ENCODE measurements at regions of chr13 and their contacts with region 1.

Region 1: DNA sequence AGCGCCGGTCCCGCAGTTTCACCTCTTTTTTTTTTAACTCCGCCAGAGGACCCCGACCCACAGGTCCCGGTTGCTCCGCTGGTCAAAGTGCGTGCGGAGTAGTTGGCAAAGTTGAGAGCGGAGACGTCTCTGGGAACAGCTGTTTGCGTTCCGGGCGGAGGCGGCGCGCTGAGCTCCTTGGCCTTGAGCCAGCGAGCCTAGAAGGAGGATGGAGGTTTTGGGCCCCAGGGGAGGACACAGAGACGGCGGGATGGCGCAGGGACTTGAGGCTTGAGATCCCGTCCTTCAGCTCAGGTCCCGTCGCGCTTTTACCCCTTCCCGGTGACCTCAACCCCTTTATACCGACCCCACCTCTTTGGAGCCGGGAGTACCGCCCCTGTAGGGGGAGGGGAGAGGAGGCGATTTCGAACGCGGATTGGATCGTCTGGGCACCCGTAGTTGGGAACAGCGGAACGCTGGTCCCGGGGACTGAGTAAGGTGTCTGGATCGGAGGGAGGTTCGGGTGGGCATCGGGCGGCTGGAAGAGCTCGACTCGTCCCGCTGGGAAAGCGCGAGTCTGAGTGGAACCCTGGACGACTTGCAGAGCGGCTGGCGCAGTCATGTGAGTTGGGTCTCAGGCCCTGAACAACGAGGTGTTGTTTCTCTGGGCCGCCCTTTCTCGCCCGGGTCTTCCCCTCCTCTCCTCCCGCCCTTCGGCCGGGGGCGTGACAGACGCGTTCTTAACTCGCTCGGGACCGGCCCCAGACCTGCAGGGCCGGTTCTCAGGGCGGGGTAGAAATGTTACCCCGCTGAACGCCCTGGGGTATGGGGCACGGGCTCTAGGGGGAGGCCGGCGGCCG is at the start of gene WBP4:
- DNase-seq: peak; percentile 91
- ATAC-seq: peak; percentile 75
- H3K4me3 Mint-ChIP-seq: peak within 1 kb of the TSS; percentile 100
- H3K27ac Mint-ChIP-seq: peak within 1 kb of the TSS; percentile 100
- H3K4me1 Mint-ChIP-seq: peaks cover 39% of the 10 kb centered on the region
- H3K27me3 Mint-ChIP-seq: peaks cover 2% of the 10 kb centered on the region
- CTCF ChIP-seq: no peak
- total RNA-seq, gene WBP4: 8.6 and 9.0 TPM in 2 replicates

Region 2: DNA sequence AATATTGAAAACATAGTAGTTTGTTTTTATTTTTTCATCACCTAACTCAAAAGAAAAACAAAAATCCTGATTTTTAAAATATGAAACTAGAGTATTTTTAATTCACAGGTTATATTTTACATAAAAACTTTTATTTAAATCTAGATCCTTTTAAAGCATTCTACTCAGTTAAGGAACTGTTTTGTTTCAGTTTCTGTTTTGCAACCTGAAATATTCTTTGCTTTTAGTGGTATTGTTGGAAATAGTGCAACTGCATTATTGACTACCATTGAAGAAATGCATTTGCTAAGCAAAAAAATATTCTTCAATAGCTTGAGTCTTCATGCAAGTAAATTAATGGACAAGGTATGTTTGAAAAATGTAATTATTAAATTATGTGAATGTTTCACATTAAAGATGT is 1362.0 kb before region 1 on chr13:
- CTCF ChIA-PET with region 1: no interaction called
- POLR2A ChIA-PET with region 1: no interaction called
- intact Hi-C with region 1: no loop called
- DNase-seq: no peak
- ATAC-seq: no peak
- H3K4me3 Mint-ChIP-seq: no peak overlapping the region
- H3K27ac Mint-ChIP-seq: no peak overlapping the region
- H3K4me1 Mint-ChIP-seq: peaks cover 1% of the 10 kb centered on the region
- H3K27me3 Mint-ChIP-seq: no peaks in the 10 kb centered on the region
- CTCF ChIP-seq: no peak

Region 3: GRCh38 chr13:40789275-40790133 is 271.8 kb before region 1 on chr13 and contains the start of gene SLC25A15:
- CTCF ChIA-PET with region 1: no interaction called
- POLR2A ChIA-PET with region 1: interaction called, 4 read pairs
- intact Hi-C with region 1: loop called (anchors 1 kb)
- DNase-seq: peak; percentile 82
- ATAC-seq: peak; percentile 95
- H3K4me3 Mint-ChIP-seq: peak within 1 kb of the TSS; percentile 83
- H3K27ac Mint-ChIP-seq: peak within 1 kb of the TSS; percentile 53
- H3K4me1 Mint-ChIP-seq: peaks cover 9% of the 10 kb centered on the region
- H3K27me3 Mint-ChIP-seq: no peaks in the 10 kb centered on the region
- CTCF ChIP-seq: no peak
- total RNA-seq, gene SLC25A15: 4.6 and 4.9 TPM in 2 replicates

Region 4: GRCh38 chr13:40982772-40983171 is 78.5 kb before region 1 on chr13:
- CTCF ChIA-PET with region 1: interaction called, 3 read pairs
- POLR2A ChIA-PET with region 1: interaction called, 9 read pairs
- intact Hi-C with region 1: loop called (anchors 1 kb)
- DNase-seq: no peak
- ATAC-seq: peak; percentile 64
- H3K4me3 Mint-ChIP-seq: peak overlapping the region; percentile 87
- H3K27ac Mint-ChIP-seq: peak overlapping the region; percentile 86
- H3K4me1 Mint-ChIP-seq: peaks cover 80% of the 10 kb centered on the region
- H3K27me3 Mint-ChIP-seq: no peaks in the 10 kb centered on the region
- CTCF ChIP-seq: no peak

Region 5: GRCh38 chr13:41132512-41133152 is 71.3 kb after region 1 on chr13 and contains the start of gene KBTBD6:
- CTCF ChIA-PET with region 1: no interaction called
- POLR2A ChIA-PET with region 1: interaction called, 4 read pairs
- intact Hi-C with region 1: loop called (anchors 1 kb)
- DNase-seq: peak; percentile 83
- ATAC-seq: peak; percentile 97
- H3K4me3 Mint-ChIP-seq: peak within 1 kb of the TSS; percentile 98
- H3K27ac Mint-ChIP-seq: peak within 1 kb of the TSS; percentile 91
- H3K4me1 Mint-ChIP-seq: peaks cover 47% of the 10 kb centered on the region
- H3K27me3 Mint-ChIP-seq: no peaks in the 10 kb centered on the region
- CTCF ChIP-seq: no peak
- total RNA-seq, gene KBTBD6: 5.1 and 6.0 TPM in 2 replicates

Region 6: DNA sequence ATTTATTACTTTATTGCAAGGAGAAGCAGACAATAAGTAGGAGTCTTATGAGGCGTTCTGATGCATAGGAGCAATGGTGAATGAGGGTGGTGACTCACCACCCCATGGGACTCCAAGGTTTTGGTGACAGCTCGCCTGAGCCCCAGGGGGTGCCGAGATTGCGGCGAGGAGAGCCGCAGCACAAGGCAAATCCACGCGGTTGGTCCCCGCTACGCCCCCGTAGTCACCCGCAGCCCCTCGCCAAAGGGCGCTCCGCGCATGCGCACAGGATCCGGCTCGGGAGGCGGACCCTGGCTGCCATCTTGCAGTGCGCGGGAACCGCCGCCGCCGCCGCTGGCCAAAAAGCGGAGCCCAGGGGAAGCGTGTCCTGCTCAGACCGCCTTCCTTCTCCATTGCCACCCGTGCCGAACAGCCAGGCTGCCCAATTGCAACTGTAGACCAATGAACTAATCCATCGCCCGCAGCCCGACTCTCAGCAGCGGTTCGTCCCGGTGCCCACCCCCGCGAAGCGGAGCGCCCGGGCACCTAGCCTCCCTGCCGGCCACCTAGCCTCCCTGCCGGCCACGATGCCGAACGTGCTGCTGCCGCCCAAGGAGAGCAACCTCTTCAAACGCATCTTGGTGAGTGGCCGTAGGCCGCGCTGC is 249.8 kb after region 1 on chr13 and contains the start of gene NAA16:
- CTCF ChIA-PET with region 1: no interaction called
- POLR2A ChIA-PET with region 1: no interaction called
- intact Hi-C with region 1: loop called (anchors 1 kb)
- DNase-seq: peak; percentile 98
- ATAC-seq: peak; percentile 92
- H3K4me3 Mint-ChIP-seq: peak within 1 kb of the TSS; percentile 96
- H3K27ac Mint-ChIP-seq: peak within 1 kb of the TSS; percentile 90
- H3K4me1 Mint-ChIP-seq: peaks cover 44% of the 10 kb centered on the region
- H3K27me3 Mint-ChIP-seq: no peaks in the 10 kb centered on the region
- CTCF ChIP-seq: no peak
- total RNA-seq, gene NAA16: 18.5 and 21.4 TPM in 2 replicates

Measured in activated B cell treated with CpG ODN at 0.5 μM for 24 hours (primary cell).